ENCODE measurements at regions of chr6 and their contacts with region 1.

Region 1: DNA sequence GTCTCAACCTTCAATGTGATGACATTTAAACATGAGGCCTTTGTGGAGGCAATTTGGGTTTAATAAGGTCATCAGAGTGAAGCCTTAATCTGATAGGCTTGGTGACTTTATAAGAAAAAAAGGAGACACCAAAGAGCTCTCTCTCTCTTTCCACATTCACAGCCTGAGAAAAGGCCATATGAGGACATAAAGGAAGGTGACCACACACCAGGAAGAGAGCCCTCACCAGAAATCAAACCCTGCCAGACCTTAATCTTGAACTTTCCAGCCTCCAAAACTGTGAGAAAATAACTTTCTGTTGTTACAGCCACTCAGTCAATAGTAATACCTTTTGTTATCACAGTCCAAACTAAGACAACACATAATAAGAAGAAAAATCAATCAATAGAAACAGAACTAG is 47.7 kb downstream of the COL12A1 start:
- DNase-seq: no peak

Region 2: DNA sequence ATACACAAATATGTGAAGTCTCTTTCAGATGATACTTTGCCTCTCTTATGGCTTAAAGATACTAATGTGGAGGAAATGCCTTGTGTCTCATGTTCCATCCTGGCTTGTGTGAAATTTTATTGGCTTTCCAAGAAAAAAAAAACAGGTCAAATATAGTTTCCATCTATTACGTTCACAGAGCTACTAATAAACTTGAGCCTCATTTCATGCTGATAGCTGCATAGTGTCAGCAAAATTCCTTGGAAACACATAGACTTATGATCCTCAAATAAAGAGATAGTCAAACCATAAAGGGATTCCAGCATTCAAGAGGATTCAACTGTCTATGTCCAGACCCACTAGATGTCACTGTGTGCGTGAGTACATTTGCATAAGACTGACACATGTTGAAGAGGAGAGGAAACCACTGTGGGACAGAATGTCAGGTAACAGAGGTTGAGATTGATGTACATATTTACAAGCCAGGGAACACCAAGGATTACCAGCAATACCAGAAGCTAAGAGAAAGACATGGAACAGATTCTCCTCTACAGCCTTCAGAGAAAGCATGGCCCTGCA is 218.9 kb before region 1 on chr6:
- intact Hi-C with region 1: loop called in 1 of 2 experiments (anchors 5 kb)
- DNase-seq: no peak

Region 3: GRCh38 chr6:75117701-75118100 is 40.5 kb before region 1 on chr6:
- intact Hi-C with region 1: no loop called
- DNase-seq: no peak

Region 4: DNA sequence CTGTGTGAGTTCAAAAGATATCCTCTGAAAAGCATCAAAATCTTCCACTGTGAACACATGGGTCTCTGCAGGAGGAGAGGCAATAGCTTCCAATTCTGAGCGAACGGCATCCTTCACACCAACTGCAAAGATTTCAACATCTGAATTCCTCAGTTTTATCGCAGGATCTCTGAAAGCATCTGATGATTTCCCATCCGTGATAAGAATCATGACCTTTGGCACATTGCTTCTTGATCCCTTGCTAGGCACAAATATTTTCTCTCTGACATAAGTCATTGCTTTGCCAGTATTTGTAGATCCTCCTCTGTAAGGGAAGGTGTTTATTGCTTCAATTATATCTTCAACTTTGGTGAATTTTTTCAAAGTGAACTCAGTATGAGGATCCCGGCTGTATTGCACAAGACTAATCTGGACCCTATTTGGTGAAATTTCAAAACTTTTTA is 24.9 kb after region 1 on chr6:
- intact Hi-C with region 1: no loop called
- DNase-seq: no peak

Measured in posterior vena cava (tissue), 2 donors.